Activated CD4-positive, alpha-beta T cell treated with anti-CD3 and anti-CD28 coated beads, Interleukin-2, amount 10 ng/mL, durations not matched to agents 24 days and 14 days (primary cell): ENCODE measurements at regions of chrX and their contacts with region 1.

Region 1: DNA sequence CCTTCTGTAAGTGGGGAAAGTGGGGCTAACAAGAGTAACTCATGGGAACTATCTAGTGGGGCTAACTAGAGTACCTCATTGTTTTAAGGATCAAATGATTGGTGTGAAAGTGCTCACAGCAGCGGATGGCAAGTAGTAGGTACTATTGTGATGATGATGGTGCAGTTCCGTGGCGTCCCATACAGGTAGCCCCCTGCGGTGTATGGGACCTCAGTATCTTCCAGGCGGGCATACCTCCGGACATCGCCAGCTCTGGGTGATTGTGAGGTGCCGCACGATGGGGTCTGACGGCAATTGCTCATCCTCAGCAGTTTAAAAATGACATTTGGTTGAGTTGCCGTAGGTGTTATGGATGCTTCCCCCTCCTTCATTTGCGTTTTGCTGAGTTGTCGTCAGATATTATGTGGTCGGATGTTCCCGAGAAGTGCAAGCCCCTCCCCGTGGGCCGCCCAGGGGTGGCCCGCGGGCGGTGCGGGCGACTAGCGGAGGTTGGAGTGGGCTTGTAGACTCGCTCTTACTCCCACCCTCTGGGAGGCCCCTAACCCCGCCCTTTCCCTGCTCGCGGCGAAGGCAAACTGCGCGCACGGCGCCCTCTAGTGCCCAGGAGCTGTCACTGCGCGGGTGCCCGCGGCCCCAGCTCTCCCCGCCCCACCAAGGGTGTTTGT is 18.3 kb upstream of the GPR101 start:
- DNase-seq: peak; percentile 94
- H3K4me3 Mint-ChIP-seq: peak overlapping the region; percentile 86
- H3K27ac Mint-ChIP-seq: peak overlapping the region; percentile 84
- H3K4me1 Mint-ChIP-seq: peaks cover 8% of the 10 kb centered on the region
- H3K27me3 Mint-ChIP-seq: peaks cover 47% of the 10 kb centered on the region

Region 2: DNA sequence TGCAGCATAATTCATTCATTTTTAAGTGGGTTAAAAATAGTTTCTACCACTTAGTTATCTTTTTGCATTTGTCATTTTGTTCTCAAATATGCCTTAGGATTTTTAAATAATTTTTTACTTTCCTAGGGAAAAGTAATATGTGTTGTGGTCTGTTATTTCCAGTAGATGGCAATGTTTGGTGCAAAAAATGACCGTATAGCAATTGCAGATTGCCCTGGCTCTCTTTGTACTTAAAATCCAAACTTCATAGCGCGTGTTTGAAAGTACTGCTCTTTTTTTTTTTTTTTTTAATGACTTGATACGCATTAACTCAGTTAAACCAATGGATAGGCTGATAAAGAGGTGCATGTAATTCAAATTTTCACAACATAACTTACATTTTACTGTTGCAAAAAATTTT is 97.2 kb before region 1 on chrX:
- intact Hi-C with region 1: loop called (anchors 1 kb)
- DNase-seq: no peak
- H3K4me3 Mint-ChIP-seq: no peak overlapping the region
- H3K27ac Mint-ChIP-seq: no peak overlapping the region
- H3K4me1 Mint-ChIP-seq: peaks cover 3% of the 10 kb centered on the region
- H3K27me3 Mint-ChIP-seq: no peaks in the 10 kb centered on the region

Region 3: GRCh38 chrX:137031517-137032340 is 20.4 kb before region 1 on chrX:
- intact Hi-C with region 1: loop called (anchors 1 kb)
- DNase-seq: peak; percentile 84
- H3K4me3 Mint-ChIP-seq: no peak overlapping the region
- H3K27ac Mint-ChIP-seq: no peak overlapping the region
- H3K4me1 Mint-ChIP-seq: peaks cover 11% of the 10 kb centered on the region
- H3K27me3 Mint-ChIP-seq: peaks cover 65% of the 10 kb centered on the region

Region 4: DNA sequence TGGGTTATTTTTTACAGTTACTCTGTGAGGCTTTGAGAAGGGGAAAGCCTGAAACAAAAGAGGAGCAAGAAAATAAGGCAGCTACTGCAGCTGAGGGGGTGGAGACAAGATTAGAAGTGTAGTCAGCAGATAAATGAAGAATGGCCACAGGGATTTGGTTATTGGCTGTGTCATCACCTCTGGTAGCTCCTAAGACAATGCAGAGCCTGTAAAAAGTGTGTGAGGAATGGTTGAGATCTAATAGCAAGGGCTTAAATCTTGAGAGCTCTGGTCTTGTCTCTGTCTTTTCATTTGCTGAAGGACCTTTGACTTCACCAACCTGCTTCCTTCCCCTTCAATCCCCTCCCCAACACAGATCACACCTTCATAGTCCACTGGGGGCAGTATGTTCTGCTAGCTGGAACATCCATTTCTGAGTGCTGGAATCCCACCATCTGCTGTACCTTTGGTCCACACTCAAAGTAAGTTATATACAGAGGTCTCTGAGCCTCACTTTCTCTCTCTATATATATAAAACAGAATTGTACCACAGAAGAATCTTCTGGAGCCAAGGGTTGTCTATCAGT is 300.1 kb after region 1 on chrX:
- intact Hi-C with region 1: no loop called
- DNase-seq: no peak
- H3K4me3 Mint-ChIP-seq: no peak overlapping the region
- H3K27ac Mint-ChIP-seq: no peak overlapping the region
- H3K4me1 Mint-ChIP-seq: peaks cover 2% of the 10 kb centered on the region
- H3K27me3 Mint-ChIP-seq: no peaks in the 10 kb centered on the region